ENCODE measurements at regions of chr7 and their contacts with region 1.

Region 1: DNA sequence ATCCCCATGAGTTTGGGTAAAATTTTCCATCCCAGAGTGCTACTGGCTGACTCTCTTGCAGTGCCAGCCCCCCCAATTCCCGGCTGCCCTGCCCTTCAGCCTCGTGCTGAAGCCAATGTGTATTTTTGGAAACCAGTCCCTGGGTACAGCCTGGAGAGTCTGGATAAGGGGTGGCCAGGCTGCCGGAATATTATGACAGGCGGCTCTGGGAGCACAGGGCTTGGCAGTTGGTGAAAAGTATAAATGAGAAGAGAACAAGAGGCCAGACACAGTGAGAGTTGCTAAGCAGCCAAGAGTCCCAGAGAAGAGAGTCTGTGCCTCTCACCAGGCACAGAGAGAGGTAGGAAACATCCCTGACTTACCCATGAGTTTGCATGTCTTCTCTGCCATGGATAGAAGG is 53.6 kb downstream of the TMEM130 start:
- DNase-seq: no peak
- ATAC-seq: peak; percentile 95

Region 2: GRCh38 chr7:98831641-98832221 is 15.5 kb after region 1 on chr7:
- intact Hi-C with region 1: loop called (anchors 1 kb)
- DNase-seq: no peak
- ATAC-seq: no peak

Region 3: DNA sequence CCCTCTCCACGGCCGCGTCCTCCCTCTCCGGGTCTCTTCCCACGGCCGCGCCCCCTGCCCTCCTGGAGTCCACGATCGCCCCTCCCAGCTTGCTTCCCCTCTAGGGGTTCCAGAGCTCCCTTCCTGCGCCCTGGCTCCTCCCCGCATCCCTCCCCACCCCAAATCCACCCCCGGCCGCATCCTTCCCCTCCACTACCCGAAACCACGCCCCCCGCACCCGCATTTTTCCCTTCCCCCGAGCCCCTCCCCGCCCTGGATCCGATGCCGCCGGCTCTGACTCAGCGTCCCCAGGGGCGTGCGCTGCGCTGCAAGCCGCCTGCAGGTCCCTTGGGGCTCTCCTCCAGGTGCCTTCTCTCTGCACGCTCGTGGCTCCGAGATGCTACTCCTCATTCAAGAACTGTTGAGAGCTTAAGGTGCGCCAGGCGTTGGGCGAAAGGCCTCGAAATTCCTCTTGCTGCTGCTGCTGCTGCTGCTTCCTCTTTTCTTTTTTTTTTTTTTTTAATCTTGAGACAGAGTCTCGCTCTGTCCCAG is 53.9 kb after region 1 on chr7:
- intact Hi-C with region 1: no loop called
- DNase-seq: peak; percentile 66
- ATAC-seq: no peak